Prostate gland (tissue), 2 donors: ENCODE measurements at regions of chr14 and their contacts with region 1.

Region 1: DNA sequence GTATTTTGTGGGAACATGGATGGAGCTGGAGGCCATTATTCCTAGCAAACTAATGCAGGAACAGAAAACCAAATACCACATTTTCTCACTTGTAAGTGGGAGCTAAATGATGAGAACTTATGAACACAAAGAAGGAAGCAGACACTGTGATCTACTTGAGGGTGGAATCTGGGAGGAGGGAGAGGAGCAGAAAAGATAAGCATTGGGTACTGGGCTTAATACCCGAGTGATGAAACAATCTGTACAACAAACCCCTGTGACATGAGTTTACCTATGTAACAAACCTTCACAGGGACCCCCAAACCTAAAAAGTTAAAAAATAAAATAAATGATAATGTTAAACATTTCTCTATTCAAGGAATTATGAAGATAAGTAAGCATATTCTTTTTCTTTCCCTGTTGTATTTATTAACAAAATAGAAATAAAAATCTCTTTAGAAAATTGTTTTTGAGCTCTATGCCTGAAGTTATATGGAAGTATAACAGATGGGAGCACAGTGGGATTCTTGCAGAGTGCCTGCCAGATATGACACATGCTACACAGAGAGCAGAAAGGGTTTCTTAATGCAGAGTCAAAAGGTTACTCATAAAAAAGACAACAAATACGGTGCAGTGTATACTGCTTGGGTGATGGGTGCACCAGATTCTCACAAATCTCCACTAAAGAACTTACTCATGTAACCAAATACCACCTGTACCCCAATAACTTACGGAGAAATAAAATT is 52.0 kb upstream of the SYNE2 start:
- DNase-seq: no peak
- H3K4me3 ChIP-seq: no peak overlapping the region
- H3K27ac ChIP-seq: no peak overlapping the region
- H3K4me1 ChIP-seq: no peaks in the 10 kb centered on the region
- H3K27me3 ChIP-seq: no peaks in the 10 kb centered on the region
- CTCF ChIP-seq: no peak
- POLR2A ChIP-seq: no peak

Region 2: DNA sequence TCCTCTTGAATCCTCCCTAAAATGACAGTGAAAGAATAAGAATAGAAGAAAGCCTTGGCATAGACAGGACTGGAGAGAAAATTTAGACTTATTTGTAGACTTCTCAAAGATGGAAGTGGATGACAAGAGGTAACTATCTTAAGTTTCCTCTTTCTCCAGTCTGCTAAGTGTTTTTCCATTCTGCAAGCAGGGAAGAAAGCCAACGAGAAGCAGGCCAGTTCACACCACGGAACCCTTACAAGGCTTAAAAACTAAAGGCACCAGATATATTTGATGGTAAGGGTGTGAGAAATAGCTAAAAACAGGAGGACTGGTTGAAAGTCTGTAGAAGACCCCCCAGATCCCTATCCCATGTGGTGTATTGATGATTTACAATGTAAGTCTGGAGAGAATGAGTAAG is 399.2 kb before region 1 on chr14:
- intact Hi-C with region 1: no loop called
- DNase-seq: no peak
- H3K4me3 ChIP-seq: no peak overlapping the region
- H3K27ac ChIP-seq: no peak overlapping the region
- H3K4me1 ChIP-seq: no peaks in the 10 kb centered on the region
- H3K27me3 ChIP-seq: no peaks in the 10 kb centered on the region
- CTCF ChIP-seq: no peak
- POLR2A ChIP-seq: no peak

Region 3: DNA sequence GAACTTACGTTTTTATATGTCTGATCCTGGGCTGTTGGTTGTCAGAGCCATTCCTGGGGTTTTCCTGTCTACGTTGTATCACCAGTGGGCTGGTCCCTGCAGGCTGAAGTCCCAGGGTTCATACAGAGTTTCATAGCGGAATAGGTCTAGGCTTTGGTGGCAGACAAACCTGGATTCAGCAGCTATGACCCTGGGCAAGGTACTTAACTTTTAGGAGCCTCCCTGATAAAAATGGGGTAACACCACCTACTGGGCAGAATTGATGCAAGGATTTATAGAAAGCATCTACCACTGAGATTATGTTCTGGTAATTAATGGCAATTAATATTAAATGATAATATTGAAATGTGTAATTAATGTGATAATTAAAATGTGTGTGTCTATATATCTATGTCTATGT is 193.2 kb after region 1 on chr14:
- intact Hi-C with region 1: loop called (anchors 10 kb)
- DNase-seq: no peak
- H3K4me3 ChIP-seq: no peak overlapping the region
- H3K27ac ChIP-seq: no peak overlapping the region
- H3K4me1 ChIP-seq: no peaks in the 10 kb centered on the region
- H3K27me3 ChIP-seq: no peaks in the 10 kb centered on the region
- CTCF ChIP-seq: peak in 2 of 4 experiments; percentile 23 to 31
- POLR2A ChIP-seq: no peak

Region 4: GRCh38 chr14:64569184-64569631 is 768.4 kb after region 1 on chr14:
- intact Hi-C with region 1: no loop called
- DNase-seq: no peak
- H3K4me3 ChIP-seq: no peak overlapping the region
- H3K27ac ChIP-seq: no peak overlapping the region
- H3K4me1 ChIP-seq: no peaks in the 10 kb centered on the region
- H3K27me3 ChIP-seq: no peaks in the 10 kb centered on the region
- CTCF ChIP-seq: no peak
- POLR2A ChIP-seq: no peak